ENCODE measurements at regions of chr1 and their contacts with region 1.

Region 1: GRCh38 chr1:18175530-18176377 is 68.2 kb downstream of the IGSF21 start:
- DNase-seq: no peak
- ATAC-seq: no peak
- H3K4me3 ChIP-seq: no peak overlapping the region
- H3K27ac ChIP-seq: no peak overlapping the region
- H3K4me1 ChIP-seq: no peaks in the 10 kb centered on the region
- H3K27me3 ChIP-seq: peaks cover 55% of the 10 kb centered on the region
- CTCF ChIP-seq: no peak

Region 2: DNA sequence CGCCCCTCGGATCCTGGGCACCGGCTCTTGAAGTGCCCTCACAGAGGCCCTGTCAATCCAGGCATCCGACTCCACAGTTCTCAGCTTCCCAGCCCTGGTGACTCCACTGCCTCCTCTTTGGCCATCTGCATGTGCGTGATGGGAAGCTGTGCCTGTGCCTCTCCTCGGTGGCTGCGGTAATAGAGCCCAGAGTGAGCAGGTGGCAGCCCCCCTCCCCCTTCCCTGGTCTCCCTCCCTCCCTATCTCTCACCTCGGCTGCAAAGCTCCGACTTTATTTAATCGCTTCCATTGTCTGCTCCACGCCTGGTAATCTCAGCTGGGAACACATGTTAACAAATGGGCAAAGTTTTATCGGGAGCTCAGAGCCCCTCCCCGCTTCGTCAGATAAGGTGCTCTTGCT is 23.7 kb after region 1 on chr1:
- CTCF ChIA-PET with region 1: no interaction called
- POLR2A ChIA-PET with region 1: no interaction called
- intact Hi-C with region 1: loop called (anchors 1 kb)
- DNase-seq: no peak
- ATAC-seq: no peak
- H3K4me3 ChIP-seq: no peak overlapping the region
- H3K27ac ChIP-seq: no peak overlapping the region
- H3K4me1 ChIP-seq: no peaks in the 10 kb centered on the region
- H3K27me3 ChIP-seq: peaks cover 81% of the 10 kb centered on the region
- CTCF ChIP-seq: no peak

Measured in PC-3 (cell line).